OCI-LY7 (cell line): ENCODE measurements at regions of chr7 and their contacts with region 1.

Region 1: DNA sequence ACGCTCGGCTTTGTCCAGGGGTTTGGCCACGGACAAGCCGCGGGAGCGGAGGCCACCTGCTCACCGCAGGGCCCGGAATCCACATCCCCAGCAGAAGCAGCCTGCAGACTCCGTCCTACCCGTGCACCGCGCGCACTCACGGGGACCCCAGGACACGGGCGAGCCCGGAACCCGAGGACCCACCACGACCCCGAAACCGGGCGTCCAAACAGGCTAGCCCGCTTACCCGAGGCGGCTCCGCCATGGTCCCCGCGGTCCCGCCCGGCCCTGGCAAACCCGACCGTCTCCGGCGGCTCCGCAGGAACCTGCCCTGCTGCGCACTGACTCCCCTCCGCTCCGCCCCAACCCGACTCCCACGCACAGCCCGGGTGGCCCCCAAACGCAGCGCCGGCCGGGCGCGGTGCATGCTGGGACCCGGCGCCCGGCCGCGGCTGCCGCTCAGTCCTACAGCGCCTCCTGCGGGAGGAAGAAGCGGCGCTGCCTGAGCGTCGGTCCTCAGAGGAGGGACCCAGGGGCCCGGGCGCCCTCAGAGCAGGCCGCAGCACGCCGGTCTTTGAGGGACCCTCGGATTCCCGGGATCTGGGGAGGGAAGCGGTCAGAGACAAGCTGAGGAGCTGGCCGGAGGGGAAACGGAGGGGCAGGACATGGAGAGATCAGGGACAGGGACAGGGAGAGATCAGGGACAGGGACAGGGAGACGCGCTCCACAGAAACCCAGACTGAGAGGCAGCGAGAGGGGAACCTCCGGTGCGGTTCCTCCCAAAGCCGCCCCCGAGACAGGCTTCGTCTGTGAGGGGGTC is at the start of gene ZNF786:
- DNase-seq: peak; percentile 94
- H3K4me3 ChIP-seq: peak within 1 kb of the TSS; percentile 95
- H3K27ac ChIP-seq: peak within 1 kb of the TSS; percentile 76
- H3K4me1 ChIP-seq: peaks cover 28% of the 10 kb centered on the region
- CTCF ChIP-seq: peak; percentile 83
- total RNA-seq, gene ZNF786: 3.9 and 5.1 TPM in 2 replicates

Region 2: GRCh38 chr7:148884299-148885022 is 206.1 kb before region 1 on chr7:
- CTCF ChIA-PET with region 1: no interaction called
- POLR2A ChIA-PET with region 1: no interaction called
- intact Hi-C with region 1: loop called (anchors 2 kb)
- DNase-seq: peak; percentile 96
- H3K4me3 ChIP-seq: peak overlapping the region; percentile 91
- H3K27ac ChIP-seq: peak overlapping the region; percentile 88
- H3K4me1 ChIP-seq: peaks cover 25% of the 10 kb centered on the region
- CTCF ChIP-seq: no peak

Region 3: DNA sequence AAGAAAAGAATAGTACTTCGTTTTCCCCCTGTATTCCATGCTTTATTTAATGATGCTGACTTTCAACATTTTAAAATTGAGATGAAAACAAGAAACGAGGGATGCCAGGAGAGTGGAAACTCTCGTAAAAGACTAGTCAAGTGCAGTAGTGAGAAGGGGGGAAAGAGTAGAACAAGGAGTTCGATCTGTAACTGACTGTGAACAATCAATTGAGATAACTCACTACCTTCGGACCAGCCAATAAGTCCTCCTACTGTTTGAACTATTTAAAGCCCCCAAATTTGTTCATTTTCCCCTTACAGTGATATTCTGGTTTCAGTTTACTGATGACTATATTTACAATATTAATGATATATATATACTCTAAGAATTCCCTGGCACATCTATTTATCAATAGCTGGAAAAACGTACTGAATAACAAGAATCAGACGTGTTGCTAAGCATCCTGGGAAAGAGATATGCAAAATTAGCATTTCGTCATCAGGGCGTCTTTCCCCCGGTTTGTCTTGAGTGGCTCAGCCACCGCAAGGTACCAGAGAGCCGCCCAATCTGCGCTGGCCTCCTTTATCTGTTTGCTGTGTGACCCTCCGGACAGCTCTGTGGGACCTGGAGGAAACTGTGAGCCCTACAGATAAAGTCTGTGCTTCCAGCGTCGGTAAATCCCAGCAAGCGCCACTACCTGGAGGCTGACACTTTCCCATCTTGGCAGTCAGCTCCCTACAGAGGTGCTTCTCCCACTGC is 103.4 kb before region 1 on chr7:
- CTCF ChIA-PET with region 1: interaction called, 3 read pairs
- POLR2A ChIA-PET with region 1: interaction called, 3 read pairs
- intact Hi-C with region 1: loop called (anchors 1 kb)
- DNase-seq: peak; percentile 94
- H3K4me3 ChIP-seq: peak overlapping the region; percentile 87
- H3K27ac ChIP-seq: peak overlapping the region; percentile 46
- H3K4me1 ChIP-seq: peaks cover 22% of the 10 kb centered on the region
- CTCF ChIP-seq: no peak

Region 4: GRCh38 chr7:149005241-149006050 is 85.2 kb before region 1 on chr7:
- CTCF ChIA-PET with region 1: no interaction called
- POLR2A ChIA-PET with region 1: interaction called, 6 read pairs
- intact Hi-C with region 1: loop called (anchors 1 kb)
- DNase-seq: peak; percentile 85
- H3K4me3 ChIP-seq: no peak overlapping the region
- H3K27ac ChIP-seq: no peak overlapping the region
- H3K4me1 ChIP-seq: no peaks in the 10 kb centered on the region
- CTCF ChIP-seq: peak; percentile 93

Region 5: DNA sequence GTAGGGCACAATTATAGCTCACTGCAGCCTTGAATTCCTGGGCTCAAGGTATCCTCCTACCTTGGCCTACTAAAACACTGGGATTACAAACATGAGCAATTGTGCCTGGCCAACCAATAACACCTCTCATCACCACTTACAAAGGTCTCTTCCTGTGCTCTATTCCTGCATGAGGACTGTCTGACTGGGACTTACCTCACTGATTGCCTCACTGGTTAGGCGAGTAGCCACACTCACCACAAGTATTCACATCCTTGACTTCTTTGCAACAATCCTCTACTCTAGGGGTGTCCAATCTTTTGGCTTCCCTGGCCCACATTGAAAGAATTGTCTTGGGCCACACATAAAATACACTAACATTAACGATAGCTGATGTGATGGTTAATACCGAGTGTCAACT is 39.7 kb before region 1 on chr7:
- CTCF ChIA-PET with region 1: no interaction called
- POLR2A ChIA-PET with region 1: no interaction called
- intact Hi-C with region 1: no loop called
- DNase-seq: no peak
- H3K4me3 ChIP-seq: no peak overlapping the region
- H3K27ac ChIP-seq: no peak overlapping the region
- H3K4me1 ChIP-seq: no peaks in the 10 kb centered on the region
- CTCF ChIP-seq: no peak

Region 6: GRCh38 chr7:149067876-149068275 is 22.7 kb before region 1 on chr7:
- CTCF ChIA-PET with region 1: interaction called, 4 read pairs
- POLR2A ChIA-PET with region 1: interaction called, 4 read pairs
- intact Hi-C with region 1: loop called (anchors 1 kb)
- DNase-seq: peak; percentile 39
- H3K4me3 ChIP-seq: no peak overlapping the region
- H3K27ac ChIP-seq: no peak overlapping the region
- H3K4me1 ChIP-seq: peaks cover 9% of the 10 kb centered on the region
- CTCF ChIP-seq: peak; percentile 69

Region 7: GRCh38 chr7:149125863-149126661 is 35.5 kb after region 1 on chr7 and contains the start of gene ZNF425:
- CTCF ChIA-PET with region 1: no interaction called
- POLR2A ChIA-PET with region 1: interaction called, 3 read pairs
- intact Hi-C with region 1: loop called (anchors 1 kb)
- DNase-seq: peak; percentile 95
- H3K4me3 ChIP-seq: peak within 1 kb of the TSS; percentile 84
- H3K27ac ChIP-seq: peak within 1 kb of the TSS; percentile 70
- H3K4me1 ChIP-seq: peaks cover 13% of the 10 kb centered on the region
- CTCF ChIP-seq: peak; percentile 87
- total RNA-seq, gene ZNF425: 0.28 and 1.4 TPM in 2 replicates

Region 8: GRCh38 chr7:149317986-149318672 is 227.5 kb after region 1 on chr7:
- CTCF ChIA-PET with region 1: no interaction called
- POLR2A ChIA-PET with region 1: no interaction called
- intact Hi-C with region 1: no loop called
- DNase-seq: peak; percentile 30
- H3K4me3 ChIP-seq: no peak overlapping the region
- H3K27ac ChIP-seq: no peak overlapping the region
- H3K4me1 ChIP-seq: no peaks in the 10 kb centered on the region
- CTCF ChIP-seq: peak; percentile 65

Region 9: GRCh38 chr7:149430192-149430591 is 339.6 kb after region 1 on chr7:
- CTCF ChIA-PET with region 1: no interaction called
- POLR2A ChIA-PET with region 1: no interaction called
- intact Hi-C with region 1: no loop called
- DNase-seq: no peak
- H3K4me3 ChIP-seq: no peak overlapping the region
- H3K27ac ChIP-seq: no peak overlapping the region
- H3K4me1 ChIP-seq: no peaks in the 10 kb centered on the region
- CTCF ChIP-seq: no peak